H1 (cell line): ENCODE measurements at regions of chr10 and their contacts with region 1.

Region 1: DNA sequence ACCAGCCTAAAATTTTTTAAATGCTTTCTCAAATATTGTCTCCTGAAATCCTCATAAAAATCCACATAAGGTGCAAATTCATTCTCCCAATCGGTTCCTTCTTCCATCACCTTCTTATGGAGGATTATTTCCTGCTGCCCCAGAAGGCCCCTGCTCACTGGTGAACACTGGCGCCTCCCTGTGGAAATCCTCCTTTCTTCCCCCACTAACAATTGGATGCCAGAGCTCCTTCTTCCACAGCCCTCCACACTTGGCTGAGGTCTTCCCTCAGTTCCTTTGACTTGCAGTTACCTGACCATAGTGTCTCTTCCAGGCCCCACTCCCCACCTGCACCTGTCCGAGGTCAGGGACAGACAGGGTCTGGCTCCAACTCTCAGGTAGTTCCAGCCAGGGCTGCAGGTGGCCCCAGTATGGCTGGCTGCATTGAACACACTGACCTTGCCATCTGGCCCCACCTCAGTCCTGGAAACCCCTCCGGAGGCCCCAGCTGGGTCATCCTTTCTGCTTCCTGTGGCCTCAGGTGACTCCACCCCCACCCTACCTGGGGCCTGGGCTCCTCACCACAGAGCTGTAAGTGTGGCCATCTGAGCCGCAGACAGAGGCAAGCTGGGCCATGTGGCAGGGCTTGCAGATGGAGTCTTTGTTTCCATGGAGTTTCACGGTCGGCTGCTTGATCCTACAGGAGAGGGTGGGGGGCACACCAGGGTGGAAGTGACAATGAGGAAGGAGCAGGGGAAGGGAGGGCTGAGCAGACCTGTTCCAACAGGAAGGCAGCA is 18.4 kb downstream of the SPOCK2 start:
- DNase-seq: peak in 1 of 2 experiments; percentile 67
- H3K4me3 ChIP-seq: no peak overlapping the region
- H3K27ac ChIP-seq: 0 out of 2 replicates have a peak overlapping the region, but pooled peaks have one; percentile 11
- H3K4me1 ChIP-seq: peaks cover 0 to 3% (median 0%) of the 10 kb centered on the region in 4 experiments; a peak in 2 of 7 replicates
- H3K27me3 ChIP-seq: no peaks in the 10 kb centered on the region
- CTCF ChIP-seq: peak; percentile 51 to 59 (median 59)
- EP300 ChIP-seq: no peak
- POLR2A ChIP-seq: no peak
- RAD21 ChIP-seq: peak; percentile 59 to 65

Region 2: GRCh38 chr10:72088889-72089575 is 19.1 kb after region 1 on chr10:
- CTCF ChIA-PET with region 1: interaction called, 11 read pairs
- POLR2A ChIA-PET with region 1: interaction called, 3 read pairs
- DNase-seq: peak in 1 of 2 experiments; percentile 62
- H3K4me3 ChIP-seq: peak overlapping the region; percentile 49 to 60 (median 54); a peak in 5 of 8 replicates
- H3K27ac ChIP-seq: no peak overlapping the region
- H3K4me1 ChIP-seq: peaks cover 3 to 22% (median 11%) of the 10 kb centered on the region in 4 experiments
- H3K27me3 ChIP-seq: peaks cover 19 to 50% (median 45%) of the 10 kb centered on the region in 4 experiments
- CTCF ChIP-seq: no peak
- EP300 ChIP-seq: no peak
- POLR2A ChIP-seq: no peak
- RAD21 ChIP-seq: no peak

Region 3: GRCh38 chr10:72099054-72099921 is 29.3 kb after region 1 on chr10:
- CTCF ChIA-PET with region 1: no interaction called
- POLR2A ChIA-PET with region 1: no interaction called
- DNase-seq: no peak
- H3K4me3 ChIP-seq: no peak overlapping the region
- H3K27ac ChIP-seq: no peak overlapping the region
- H3K4me1 ChIP-seq: no peaks in the 10 kb centered on the region
- H3K27me3 ChIP-seq: no peaks in the 10 kb centered on the region
- CTCF ChIP-seq: no peak
- EP300 ChIP-seq: no peak
- POLR2A ChIP-seq: no peak
- RAD21 ChIP-seq: no peak